Dorsolateral prefrontal cortex (tissue), 120 donors: ENCODE measurements at regions of chr2 and their contacts with region 1.

Region 1: DNA sequence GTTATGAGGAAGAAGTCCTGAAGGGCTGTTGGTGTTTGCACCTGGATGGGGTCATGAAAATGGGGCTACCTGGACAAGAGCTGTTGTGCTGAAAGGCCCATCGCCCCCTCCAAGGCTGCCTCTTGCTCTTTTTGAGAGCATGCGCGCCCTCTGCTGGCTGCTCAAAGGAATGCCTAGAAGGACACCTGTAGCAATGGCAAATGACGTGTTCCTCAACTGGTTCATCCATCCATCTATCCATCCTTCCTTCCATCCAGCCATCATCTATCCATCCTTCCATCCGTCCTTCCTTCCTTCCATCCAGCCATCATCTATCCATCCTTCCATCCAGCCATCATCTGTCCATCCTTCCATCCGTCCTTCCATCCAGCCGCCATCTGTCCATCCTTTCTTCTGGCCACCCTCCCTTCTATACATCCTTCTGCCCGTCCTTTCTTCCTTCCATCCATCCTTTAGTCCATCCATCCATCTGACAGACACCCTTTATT is 17.2 kb upstream of the RPL31 start:
- DNase-seq: peak; percentile 69 to 87 (median 82)
- H3K4me3 ChIP-seq: no peak overlapping the region
- H3K27ac ChIP-seq: peak overlapping the region in 35 of 59 donors; percentile 13 to 92 (median 78)
- H3K27me3 ChIP-seq: no peaks in the 10 kb centered on the region
- CTCF ChIP-seq: peak; percentile 65 to 98 (median 94)

Region 2: DNA sequence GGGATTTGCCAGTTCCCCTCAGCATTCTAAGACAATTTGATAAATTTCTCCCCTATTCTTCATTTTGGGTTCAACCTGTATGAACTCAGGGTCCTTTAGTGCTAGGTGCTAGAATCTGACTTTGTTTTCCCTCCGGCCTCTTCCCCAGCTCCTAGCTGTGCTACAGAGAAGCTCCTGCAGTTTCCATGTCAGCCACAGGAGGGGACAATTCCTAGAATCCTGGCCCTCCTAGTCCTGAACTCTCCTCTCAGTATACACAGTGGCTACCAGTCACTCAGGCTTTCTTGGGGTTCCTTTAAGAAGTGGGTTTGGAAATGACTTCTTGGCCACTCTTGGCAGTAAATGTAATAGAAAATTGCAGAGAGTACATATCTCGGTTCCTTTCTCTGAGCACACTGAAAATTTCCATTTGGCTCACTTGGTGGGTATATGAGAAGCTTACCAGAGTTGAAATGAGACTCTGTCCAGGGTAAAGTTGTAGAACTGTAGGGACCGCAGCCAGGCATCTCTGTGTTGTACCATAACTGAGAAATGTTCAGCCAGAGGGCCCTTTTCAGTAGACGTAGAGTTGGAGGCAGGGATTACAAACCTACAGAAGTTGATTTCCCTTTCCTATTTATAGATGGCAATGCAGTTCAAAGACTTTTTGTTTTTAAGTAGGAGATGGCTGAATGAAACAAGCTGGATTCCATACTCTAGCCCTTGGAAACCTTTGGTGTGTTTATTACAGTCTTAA is 562.4 kb before region 1 on chr2:
- intact Hi-C with region 1: loop called (anchors 5 to 10 kb)
- DNase-seq: peak in 1 of 10 donors; percentile 30
- H3K4me3 ChIP-seq: no peak overlapping the region
- H3K27ac ChIP-seq: no peak overlapping the region
- H3K27me3 ChIP-seq: no peaks in the 10 kb centered on the region
- CTCF ChIP-seq: peak in 53 of 56 donors; percentile 13 to 66 (median 48)

Region 3: DNA sequence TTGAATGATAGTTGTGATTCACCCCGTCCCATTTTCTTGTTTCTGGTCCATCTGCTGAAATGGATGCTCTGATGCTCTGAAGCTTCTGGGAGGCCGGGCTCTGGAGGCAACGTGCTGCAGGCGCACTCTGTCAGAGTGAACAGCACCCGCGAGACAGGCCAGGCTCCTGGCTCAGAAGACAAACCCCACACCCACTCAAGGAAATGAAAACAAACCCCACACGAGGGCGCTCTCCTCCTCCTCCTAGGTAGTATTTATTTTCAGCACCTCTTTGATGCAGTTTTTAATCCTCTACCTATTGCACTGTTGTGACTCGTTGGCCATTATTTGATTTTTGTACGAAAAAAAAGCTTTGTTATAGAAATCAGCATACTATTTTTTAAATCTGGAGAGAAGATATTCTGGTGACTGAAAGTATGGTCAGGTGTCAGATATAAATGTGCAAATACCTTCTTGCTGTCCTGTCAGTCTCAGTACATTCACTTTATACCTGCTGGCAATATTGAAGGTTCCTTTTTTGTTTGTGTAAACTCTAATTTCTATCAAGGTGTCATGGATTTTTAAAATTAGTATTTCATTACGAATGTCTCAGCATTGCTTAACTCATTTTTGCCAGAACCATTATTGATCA is 557.2 kb before region 1 on chr2:
- intact Hi-C with region 1: loop called (anchors 5 to 10 kb)
- DNase-seq: peak; percentile 44 to 85 (median 74)
- H3K4me3 ChIP-seq: no peak overlapping the region
- H3K27ac ChIP-seq: peak overlapping the region in 12 of 59 donors; percentile 0 to 85 (median 38)
- H3K27me3 ChIP-seq: no peaks in the 10 kb centered on the region
- CTCF ChIP-seq: peak; percentile 21 to 71 (median 61)

Region 4: GRCh38 chr2:100610381-100610831 is 374.5 kb before region 1 on chr2:
- intact Hi-C with region 1: loop called (anchors 2 kb)
- DNase-seq: peak; percentile 54 to 92 (median 88)
- H3K4me3 ChIP-seq: no peak overlapping the region
- H3K27ac ChIP-seq: peak overlapping the region in 1 of 59 donors; percentile 45
- H3K27me3 ChIP-seq: no peaks in the 10 kb centered on the region
- CTCF ChIP-seq: peak; percentile 24 to 87 (median 74)

Region 5: DNA sequence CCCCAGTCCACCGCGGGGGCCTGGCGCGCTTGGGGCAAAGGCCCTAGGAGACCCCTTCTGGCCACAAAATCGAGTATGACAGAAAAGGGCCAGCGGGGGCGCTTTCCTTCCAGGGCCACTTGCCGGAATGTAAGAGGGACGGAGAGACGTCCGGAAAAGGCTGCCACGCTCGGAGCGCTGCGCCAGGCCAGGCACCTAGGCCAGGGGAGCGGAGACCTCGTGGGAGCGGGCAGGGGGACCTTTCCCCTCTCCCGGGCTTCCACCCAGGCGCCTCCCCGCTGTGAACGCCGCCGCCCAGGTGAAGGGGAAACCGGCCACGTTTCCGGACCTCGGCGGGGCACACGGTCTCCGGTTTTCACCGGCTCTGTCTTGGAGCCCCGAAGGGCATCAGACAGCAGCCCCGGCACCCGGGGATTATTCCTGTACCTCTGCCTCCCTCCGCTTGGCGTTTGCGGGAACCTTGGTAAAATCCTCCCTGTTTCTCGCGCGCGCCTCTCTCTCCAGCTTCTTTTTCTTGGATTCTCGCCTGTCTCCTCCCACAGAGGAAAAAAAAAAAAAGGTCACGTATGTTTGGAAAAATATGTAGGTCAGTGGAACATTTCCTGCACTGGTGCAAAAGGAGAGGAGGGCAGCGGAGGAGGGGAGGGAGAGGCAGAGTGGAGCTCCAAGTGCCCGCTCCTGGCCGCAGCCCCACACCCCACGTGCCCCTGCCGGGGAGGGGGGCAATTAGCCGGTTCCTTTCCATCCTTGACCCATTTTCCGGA is 166.1 kb before region 1 on chr2:
- intact Hi-C with region 1: loop called (anchors 5 to 10 kb)
- DNase-seq: peak in 5 of 10 donors; percentile 25 to 49 (median 46)
- H3K4me3 ChIP-seq: peak overlapping the region; percentile 33 to 83 (median 70)
- H3K27ac ChIP-seq: peak overlapping the region in 56 of 59 donors; percentile 18 to 94 (median 81)
- H3K27me3 ChIP-seq: peaks cover 0 to 23% (median 0%) of the 10 kb centered on the region in 45 donors
- CTCF ChIP-seq: peak in 20 of 56 donors; percentile 11 to 40 (median 28)

Region 6: DNA sequence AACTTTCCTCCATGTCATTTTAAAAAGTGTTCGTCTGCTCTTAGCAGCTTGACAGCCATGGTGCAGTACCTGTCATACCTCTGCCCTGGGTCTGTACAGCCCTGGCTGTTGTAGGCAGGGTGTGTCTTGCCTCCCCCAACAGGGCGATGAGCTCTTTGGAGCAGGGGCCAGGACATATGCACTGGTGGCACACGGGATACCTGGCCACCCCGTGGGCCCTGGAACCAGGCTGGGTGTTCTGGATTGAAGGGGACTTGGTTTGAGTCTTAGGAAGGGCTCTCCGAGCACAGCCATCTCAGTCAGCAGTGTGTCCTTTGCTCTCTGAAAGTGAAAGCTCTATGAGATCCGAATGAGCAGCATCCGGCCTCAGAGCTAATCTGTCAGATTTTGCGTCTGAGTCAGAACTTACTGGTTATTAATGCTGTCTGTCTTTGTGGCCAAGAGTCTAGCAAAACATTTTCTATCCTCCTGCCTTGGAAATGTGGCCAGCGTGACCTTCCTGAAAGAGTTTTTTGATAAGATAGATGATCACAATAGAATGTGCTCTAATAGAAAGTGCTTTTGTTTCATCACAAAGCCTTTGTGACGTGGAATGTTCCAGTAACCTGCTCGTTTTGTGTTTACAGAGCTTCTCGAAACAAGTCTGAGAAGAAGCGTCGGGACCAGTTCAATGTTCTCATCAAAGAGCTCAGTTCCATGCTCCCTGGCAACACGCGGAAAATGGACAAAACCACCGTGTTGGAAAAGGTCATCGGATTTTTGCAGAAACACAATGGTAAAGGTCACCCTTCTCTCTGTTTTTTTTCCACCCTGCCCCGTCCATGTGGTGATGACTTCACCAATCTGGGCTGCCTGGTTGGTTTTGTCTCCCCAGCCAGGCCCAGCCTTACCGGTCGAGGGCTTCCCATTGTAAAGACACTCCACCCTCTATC is 60.1 kb before region 1 on chr2:
- intact Hi-C with region 1: loop called in 1 of 2 experiments (anchors 10 kb)
- DNase-seq: no peak
- H3K4me3 ChIP-seq: peak overlapping the region in 46 of 59 donors; percentile 3 to 59 (median 33)
- H3K27ac ChIP-seq: peak overlapping the region in 58 of 59 donors; percentile 3 to 95 (median 76)
- H3K27me3 ChIP-seq: no peaks in the 10 kb centered on the region
- CTCF ChIP-seq: no peak

Region 7: DNA sequence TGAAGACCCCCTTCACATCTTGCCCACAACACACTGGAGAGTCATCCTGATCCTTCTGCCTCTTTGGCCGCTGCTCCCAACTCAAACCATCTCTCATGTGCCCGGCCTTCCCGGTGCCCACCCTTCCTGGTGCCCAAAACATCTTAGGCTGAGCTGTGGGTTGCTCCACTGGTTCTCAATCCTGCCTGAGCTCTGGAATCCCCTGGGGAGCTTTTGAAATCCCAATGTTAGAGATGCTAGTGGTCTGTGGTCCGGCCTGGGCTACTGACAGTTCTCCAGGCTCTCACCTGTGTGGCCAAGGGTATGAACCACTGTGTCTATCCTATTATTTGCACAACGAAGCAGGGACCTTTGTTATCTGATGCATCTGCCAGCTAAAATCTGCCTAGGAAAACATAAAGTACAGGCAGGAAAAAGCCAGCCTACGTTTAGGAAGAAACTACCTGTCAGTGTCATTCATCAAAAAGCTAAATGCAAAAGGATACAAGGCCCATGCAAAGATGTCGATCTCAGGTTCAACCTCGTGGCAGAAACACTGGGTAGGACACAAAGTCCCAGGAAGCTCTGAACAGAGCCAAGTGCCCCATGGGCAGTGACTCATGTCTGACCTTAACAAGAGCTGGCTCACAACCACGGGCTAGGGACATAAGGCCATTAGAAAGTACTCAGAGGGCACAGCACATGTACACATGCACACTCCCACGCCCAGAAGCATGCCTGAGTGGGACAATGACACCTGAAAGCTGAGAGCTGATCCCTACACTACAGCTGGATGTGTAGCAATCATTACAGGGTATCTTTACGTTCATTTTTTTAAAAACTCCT is 135.4 kb after region 1 on chr2:
- intact Hi-C with region 1: no loop called
- DNase-seq: no peak
- H3K4me3 ChIP-seq: no peak overlapping the region
- H3K27ac ChIP-seq: peak overlapping the region in 16 of 59 donors; percentile 1 to 61 (median 30)
- H3K27me3 ChIP-seq: no peaks in the 10 kb centered on the region
- CTCF ChIP-seq: no peak